Mammary epithelial cell (primary cell): ENCODE measurements at regions of chr11 and their contacts with region 1.

Region 1: GRCh38 chr11:72722050-72722748 is 30.0 kb downstream of the ARAP1 start:
- DNase-seq: peak; percentile 84
- H3K4me3 ChIP-seq: peak overlapping the region; percentile 49 to 61 (median 58)
- H3K27ac ChIP-seq: peak overlapping the region; percentile 55
- H3K4me1 ChIP-seq: peaks cover 44% of the 10 kb centered on the region
- H3K27me3 ChIP-seq: no peaks in the 10 kb centered on the region
- CTCF ChIP-seq: no peak

Region 2: DNA sequence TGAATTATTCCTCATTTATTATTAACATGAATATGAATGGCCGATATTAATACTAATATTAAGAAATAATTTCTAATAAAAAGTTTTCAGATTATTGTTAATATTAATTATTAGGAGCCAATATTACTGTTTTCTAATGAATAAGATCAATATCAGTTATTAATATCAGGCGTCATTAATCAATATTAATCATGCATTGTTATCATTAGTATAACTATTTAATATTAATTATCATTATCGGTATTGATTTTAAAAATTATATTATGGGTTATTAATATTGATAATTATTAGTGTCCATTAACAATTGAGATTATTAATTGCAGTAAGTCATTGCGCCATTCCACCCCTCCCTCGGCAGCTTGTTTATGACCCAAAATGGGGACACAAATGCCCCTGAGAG is 1136.5 kb before region 1 on chr11:
- CTCF ChIA-PET with region 1: no interaction called
- dilution Hi-C with region 1: no loop called
- in situ Hi-C with region 1: no loop called
- intact Hi-C with region 1: no loop called
- DNase-seq: no peak
- H3K4me3 ChIP-seq: no peak overlapping the region
- H3K27ac ChIP-seq: no peak overlapping the region
- H3K4me1 ChIP-seq: no peaks in the 10 kb centered on the region
- H3K27me3 ChIP-seq: no peaks in the 10 kb centered on the region
- CTCF ChIP-seq: no peak

Region 3: GRCh38 chr11:72793425-72794367 is 71.5 kb after region 1 on chr11 and contains the start of gene STARD10:
- CTCF ChIA-PET with region 1: interaction called, 12 read pairs
- dilution Hi-C with region 1: no loop called
- in situ Hi-C with region 1: loop called (anchors 10 kb)
- intact Hi-C with region 1: loop called (anchors 1 kb)
- DNase-seq: peak; percentile 94
- H3K4me3 ChIP-seq: peak within 1 kb of the TSS; percentile 63 to 69 (median 68)
- H3K27ac ChIP-seq: peak within 1 kb of the TSS; percentile 60
- H3K4me1 ChIP-seq: peaks cover 25% of the 10 kb centered on the region
- H3K27me3 ChIP-seq: no peaks in the 10 kb centered on the region
- CTCF ChIP-seq: peak; percentile 61 to 92
- total RNA-seq, gene STARD10: 32.8 to 63.0 TPM

Region 4: DNA sequence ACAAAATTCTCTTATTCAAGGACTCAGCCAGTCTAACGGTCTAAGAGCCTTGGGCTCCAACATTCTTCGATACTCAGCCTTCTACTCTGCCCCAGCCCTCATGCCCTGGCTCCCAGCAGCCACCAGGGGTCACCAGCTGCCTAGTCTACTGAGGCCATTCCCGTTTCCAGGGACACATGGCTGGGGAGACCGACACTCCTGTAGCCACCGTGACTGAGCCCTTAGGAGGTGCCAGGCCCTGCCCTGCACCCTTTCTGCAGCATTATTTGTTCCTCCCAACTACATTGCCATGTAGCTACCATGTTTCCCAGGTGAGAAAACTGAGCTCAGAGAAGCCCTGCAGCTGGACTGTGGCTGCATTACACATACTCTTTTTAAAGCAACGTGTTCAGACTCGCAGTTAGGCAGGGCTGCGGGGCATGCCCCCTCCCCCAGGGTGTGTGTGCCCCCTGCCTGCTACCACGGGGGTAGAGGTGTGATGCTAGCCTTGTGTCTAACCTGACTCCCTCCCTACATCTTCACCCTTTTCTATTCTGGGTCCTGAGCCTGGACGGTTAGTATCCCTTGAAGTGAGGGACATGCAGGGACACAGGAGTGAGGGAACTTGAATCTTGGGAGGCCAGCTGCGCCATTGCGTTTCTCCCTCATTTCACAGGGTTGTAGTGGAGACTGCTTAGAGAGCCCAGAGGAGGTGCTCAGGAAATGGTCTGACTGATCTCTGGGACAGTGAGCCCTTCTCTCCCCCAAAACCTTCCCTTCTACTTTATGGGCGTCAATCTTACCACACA is 109.5 kb after region 1 on chr11:
- CTCF ChIA-PET with region 1: no interaction called
- dilution Hi-C with region 1: no loop called
- in situ Hi-C with region 1: no loop called
- intact Hi-C with region 1: loop called (anchors 5 kb)
- DNase-seq: peak; percentile 61
- H3K4me3 ChIP-seq: no peak overlapping the region
- H3K27ac ChIP-seq: no peak overlapping the region
- H3K4me1 ChIP-seq: peaks cover 9% of the 10 kb centered on the region
- H3K27me3 ChIP-seq: no peaks in the 10 kb centered on the region
- CTCF ChIP-seq: peak; percentile 93 to 96

Region 5: GRCh38 chr11:72924568-72925190 is 202.5 kb after region 1 on chr11:
- CTCF ChIA-PET with region 1: no interaction called
- dilution Hi-C with region 1: no loop called
- in situ Hi-C with region 1: no loop called
- intact Hi-C with region 1: loop called (anchors 10 kb)
- DNase-seq: peak; percentile 21
- H3K4me3 ChIP-seq: no peak overlapping the region
- H3K27ac ChIP-seq: no peak overlapping the region
- H3K4me1 ChIP-seq: no peaks in the 10 kb centered on the region
- H3K27me3 ChIP-seq: no peaks in the 10 kb centered on the region
- CTCF ChIP-seq: peak; percentile 64 to 67

Region 6: DNA sequence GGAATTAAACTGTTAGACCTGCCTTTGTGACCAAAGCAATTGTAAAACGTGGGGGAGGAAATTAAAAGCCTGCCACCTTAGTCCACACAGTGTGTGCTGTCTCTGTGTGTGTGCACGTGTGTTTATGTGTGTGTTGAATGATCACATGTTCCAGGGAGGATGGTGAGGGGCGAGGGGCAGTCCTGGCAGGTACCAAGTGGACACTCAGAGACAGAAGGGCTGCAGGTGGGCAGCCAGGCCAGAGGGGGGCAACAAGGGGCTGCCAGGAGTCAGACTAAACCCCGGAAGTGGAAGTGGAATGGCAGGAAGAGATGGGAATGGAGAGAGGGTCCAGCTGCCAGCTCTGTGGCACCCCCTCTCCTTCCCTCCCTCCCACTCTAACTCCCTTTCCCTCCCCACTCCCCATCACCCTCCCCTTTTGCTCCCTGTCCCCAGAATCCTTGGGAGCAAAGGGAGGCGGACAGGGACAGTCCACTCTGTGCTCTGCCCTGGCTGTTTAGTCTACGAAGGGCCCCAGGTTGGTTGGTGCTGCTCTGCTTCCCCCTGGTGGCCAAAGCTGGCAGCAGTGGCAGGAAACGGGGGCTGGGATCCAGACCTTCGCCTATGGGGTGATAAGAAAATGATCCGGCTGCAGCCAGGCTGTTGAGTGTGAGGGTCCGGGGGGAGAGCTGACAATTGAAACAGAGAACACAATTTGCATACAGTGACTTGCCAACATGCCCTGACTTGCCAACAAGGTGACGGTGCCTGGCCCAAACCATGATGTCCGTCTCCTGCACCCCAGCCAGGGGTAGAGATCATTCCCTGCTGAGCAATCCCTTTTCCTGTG is 520.3 kb after region 1 on chr11:
- CTCF ChIA-PET with region 1: no interaction called
- dilution Hi-C with region 1: no loop called
- in situ Hi-C with region 1: loop called in 1 of 2 experiments (anchors 5 kb)
- intact Hi-C with region 1: loop called (anchors 5 kb)
- DNase-seq: peak; percentile 63
- H3K4me3 ChIP-seq: no peak overlapping the region
- H3K27ac ChIP-seq: no peak overlapping the region
- H3K4me1 ChIP-seq: peaks cover 45% of the 10 kb centered on the region
- H3K27me3 ChIP-seq: no peaks in the 10 kb centered on the region
- CTCF ChIP-seq: peak; percentile 96 to 99